Right ventricle myocardium inferior (tissue), 1 donor: ENCODE measurements at regions of chr1 and their contacts with region 1.

Region 1: DNA sequence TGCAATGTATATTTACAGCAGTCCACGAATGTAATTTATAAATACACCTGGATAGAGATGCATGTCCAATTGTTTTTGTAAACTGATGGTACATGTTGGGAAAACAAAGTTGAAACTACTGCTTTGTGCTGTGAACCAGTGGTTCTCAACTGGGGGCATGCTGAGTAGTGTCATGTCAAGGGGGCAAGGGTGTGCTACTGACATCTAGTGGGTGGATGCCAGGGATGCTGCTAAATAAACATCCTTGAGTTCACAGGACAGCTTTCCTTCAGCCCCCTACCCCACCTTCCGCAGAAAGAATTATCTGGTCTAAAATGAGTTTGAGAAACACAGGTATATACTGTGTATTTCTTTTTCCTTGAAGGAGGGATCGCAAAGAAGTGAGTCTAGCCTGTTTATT is 95.9 kb downstream of the RASAL2 start:
- DNase-seq: no peak
- ATAC-seq: peak; percentile 79

Region 2: GRCh38 chr1:177959811-177960515 is 229.9 kb before region 1 on chr1:
- intact Hi-C with region 1: loop called (anchors 10 kb)
- DNase-seq: no peak
- ATAC-seq: peak; percentile 50

Region 3: DNA sequence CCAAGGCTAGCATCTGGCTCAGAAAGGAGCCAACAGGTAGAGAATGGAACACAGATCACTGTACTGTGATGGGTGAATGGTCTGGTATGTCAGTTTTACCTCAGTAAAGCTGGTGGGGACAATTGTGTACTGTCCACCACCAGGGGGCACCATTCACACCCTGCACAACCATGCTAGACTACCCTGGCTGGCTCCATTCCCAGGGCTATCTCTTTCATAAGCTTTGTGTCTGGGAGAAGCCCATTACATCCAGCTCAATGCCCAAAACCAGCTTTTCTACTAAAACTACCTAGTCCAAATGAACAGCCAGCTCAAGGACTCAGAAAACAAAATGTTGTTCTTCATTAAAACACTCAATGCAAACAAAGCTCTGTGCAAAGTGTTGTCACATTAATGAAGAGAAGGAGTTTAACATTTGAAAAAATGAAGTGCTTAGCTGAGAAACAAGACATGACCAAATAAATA is 157.9 kb before region 1 on chr1:
- intact Hi-C with region 1: loop called (anchors 5 kb)
- DNase-seq: peak; percentile 86
- ATAC-seq: peak; percentile 70

Region 4: GRCh38 chr1:178055779-178056471 is 133.9 kb before region 1 on chr1:
- intact Hi-C with region 1: loop called (anchors 1 kb)
- DNase-seq: no peak
- ATAC-seq: peak; percentile 59

Region 5: DNA sequence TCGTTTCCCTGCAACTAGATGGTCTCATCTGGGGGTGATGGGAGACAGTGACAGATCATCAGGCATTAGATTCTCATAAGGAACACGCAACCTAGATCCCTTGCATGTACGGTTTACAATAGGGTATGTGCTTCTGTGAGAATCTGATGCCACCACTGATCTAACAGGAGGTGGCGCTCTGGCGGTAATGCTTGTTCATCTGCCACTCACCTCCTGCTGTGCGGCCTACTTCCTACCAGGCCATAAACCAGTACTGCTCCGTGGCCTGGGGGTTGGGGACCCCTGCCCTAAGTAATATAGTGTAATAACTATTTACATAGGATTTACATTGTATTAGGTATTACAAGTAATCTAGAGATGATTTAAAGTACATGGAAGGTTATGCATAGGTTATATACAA is 172.0 kb after region 1 on chr1:
- intact Hi-C with region 1: no loop called
- DNase-seq: peak; percentile 52
- ATAC-seq: no peak